ENCODE measurements at regions of chrX and their contacts with region 1.

Region 1: DNA sequence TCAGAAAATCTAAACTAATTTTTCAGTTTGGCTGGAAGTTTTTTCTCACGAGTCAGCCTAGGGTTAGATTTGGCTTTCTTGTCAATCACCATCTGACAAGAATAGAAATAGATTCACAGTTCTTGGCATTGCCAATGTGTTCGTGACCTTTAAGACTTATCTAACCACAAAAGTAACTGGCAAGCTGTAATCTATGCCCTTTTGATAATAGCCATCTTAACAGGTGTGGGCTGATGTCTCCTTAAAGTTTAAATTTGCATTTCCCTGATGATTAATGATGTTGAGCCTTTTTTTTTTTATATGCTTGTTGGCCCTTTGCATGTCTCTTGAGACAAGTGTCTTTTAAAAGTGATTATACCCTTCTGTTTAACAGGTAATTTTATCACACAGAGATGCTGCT is 460.3 kb upstream of the PRKX start:
- DNase-seq: no peak
- H3K4me3 ChIP-seq: no peak overlapping the region
- H3K27ac ChIP-seq: no peak overlapping the region
- H3K4me1 ChIP-seq: no peaks in the 10 kb centered on the region
- H3K27me3 ChIP-seq: no peaks in the 10 kb centered on the region
- CTCF ChIP-seq: no peak
- POLR2A ChIP-seq: no peak

Region 2: GRCh38 chrX:2286731-2287130 is 1887.0 kb before region 1 on chrX:
- intact Hi-C with region 1: loop called (anchors 5 kb)
- DNase-seq: no peak
- H3K4me3 ChIP-seq: no peak overlapping the region
- H3K27ac ChIP-seq: no peak overlapping the region
- H3K4me1 ChIP-seq: no peaks in the 10 kb centered on the region
- H3K27me3 ChIP-seq: no peaks in the 10 kb centered on the region
- CTCF ChIP-seq: no peak
- POLR2A ChIP-seq: no peak